Lower leg skin (tissue), 4 donors: ENCODE measurements at regions of chr11 and their contacts with region 1.

Region 1: DNA sequence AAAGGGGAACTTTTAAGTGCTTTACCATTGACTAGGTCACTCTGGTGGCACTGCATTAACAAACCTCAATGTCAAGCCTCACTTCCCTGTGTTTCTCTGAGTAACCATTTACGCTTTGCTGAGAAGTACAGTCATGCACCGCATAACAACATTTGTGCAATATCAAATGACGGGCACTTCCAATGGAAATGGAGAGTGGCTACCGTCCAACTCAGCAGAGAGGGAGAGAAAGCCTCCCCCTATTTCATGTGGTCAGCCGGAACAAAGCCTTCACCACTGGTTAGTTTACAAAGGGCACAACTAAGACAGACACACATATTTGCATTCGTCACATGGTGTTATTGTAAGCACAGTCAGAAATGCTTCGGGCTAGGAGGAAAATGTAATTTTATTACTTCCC is 117.3 kb downstream of the RASSF10 start:
- DNase-seq: no peak
- H3K4me3 ChIP-seq: no peak overlapping the region
- CTCF ChIP-seq: no peak
- POLR2A ChIP-seq: no peak

Region 2: DNA sequence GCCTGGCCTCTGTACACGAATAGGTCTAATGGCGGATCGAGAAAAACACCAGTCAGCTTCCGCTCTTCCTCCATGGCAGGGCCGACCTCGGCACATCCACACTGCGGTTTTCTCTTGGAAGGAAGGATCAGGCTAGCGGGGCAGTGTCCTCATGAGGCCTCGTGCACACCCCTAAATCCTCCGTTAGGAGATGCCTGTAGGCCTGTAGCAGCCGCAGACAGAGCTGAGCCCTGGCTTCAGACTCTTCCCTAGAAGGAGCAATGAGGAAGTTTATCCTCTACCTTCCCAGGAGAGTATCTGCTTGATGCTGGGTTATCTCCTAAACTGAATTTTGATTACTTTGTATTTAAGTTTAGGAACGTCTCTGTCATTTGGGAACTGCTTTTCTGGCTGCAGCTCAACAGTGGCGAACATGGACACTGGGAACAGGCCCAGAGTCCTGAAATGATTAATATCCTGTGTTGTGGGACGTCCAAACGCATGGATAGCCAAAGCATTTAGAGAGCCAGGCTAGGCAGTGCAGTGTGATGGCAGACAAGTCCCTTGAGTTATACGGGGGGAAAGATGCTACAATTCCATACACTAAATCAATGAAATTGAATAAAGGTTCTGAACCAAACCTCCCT is 134.6 kb after region 1 on chr11:
- intact Hi-C with region 1: no loop called
- DNase-seq: no peak
- H3K4me3 ChIP-seq: no peak overlapping the region
- CTCF ChIP-seq: no peak
- POLR2A ChIP-seq: no peak

Region 3: GRCh38 chr11:13472001-13472400 is 345.6 kb after region 1 on chr11:
- intact Hi-C with region 1: loop called (anchors 5 kb)
- DNase-seq: no peak
- H3K4me3 ChIP-seq: no peak overlapping the region
- CTCF ChIP-seq: no peak
- POLR2A ChIP-seq: no peak